Activated CD8-positive, alpha-beta T cell treated with anti-CD3 and anti-CD28 coated beads for 36 hours (primary cell): ENCODE measurements at regions of chr6 and their contacts with region 1.

Region 1: GRCh38 chr6:127893541-127893940 is 7.3 kb downstream of the THEMIS start:
- DNase-seq: peak; percentile 49
- ATAC-seq: peak; percentile 66
- H3K4me3 Mint-ChIP-seq: peak overlapping the region; percentile 79
- H3K27ac Mint-ChIP-seq: peak overlapping the region; percentile 95
- H3K4me1 Mint-ChIP-seq: peaks cover 35% of the 10 kb centered on the region
- H3K27me3 Mint-ChIP-seq: no peaks in the 10 kb centered on the region
- CTCF ChIP-seq: no peak

Region 2: DNA sequence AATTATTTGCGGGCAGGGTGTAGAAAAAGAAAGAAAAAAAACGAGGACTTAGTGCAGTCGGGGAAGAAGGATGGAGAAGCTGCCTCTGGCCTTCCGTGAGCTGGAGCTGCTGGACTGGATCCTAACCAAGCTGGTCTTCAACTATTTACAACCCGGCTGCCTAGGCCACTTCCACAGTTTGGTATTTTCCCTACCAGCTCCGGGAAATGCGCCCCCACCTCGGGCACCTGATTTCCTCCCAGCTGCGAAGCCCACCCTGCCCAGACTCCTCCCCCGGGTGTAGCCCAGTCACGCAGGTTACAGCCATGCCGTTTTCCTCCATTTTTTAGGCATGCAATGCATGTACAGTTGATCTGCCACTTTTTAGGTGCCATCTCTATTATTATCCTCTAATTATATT is 13.9 kb before region 1 on chr6:
- CTCF ChIA-PET with region 1: interaction called, 5 read pairs
- POLR2A ChIA-PET with region 1: interaction called, 6 read pairs
- intact Hi-C with region 1: loop called (anchors 2 kb)
- DNase-seq: peak; percentile 83
- ATAC-seq: peak; percentile 76
- H3K4me3 Mint-ChIP-seq: peak overlapping the region; percentile 77
- H3K27ac Mint-ChIP-seq: peak overlapping the region; percentile 92
- H3K4me1 Mint-ChIP-seq: peaks cover 83% of the 10 kb centered on the region
- H3K27me3 Mint-ChIP-seq: no peaks in the 10 kb centered on the region
- CTCF ChIP-seq: no peak